ENCODE measurements at regions of chr12 and their contacts with region 1.

Region 1: GRCh38 chr12:26832822-26833742 is at the start of gene ITPR2:
- H3K4me3 Mint-ChIP-seq: peak within 1 kb of the TSS; percentile 94
- H3K27ac Mint-ChIP-seq: peak within 1 kb of the TSS; percentile 100
- H3K4me1 Mint-ChIP-seq: peaks cover 61% of the 10 kb centered on the region
- H3K27me3 Mint-ChIP-seq: no peaks in the 10 kb centered on the region

Region 2: GRCh38 chr12:26791301-26791791 is 41.7 kb before region 1 on chr12:
- intact Hi-C with region 1: loop called (anchors 1 kb)
- H3K4me3 Mint-ChIP-seq: no peak overlapping the region
- H3K27ac Mint-ChIP-seq: peak overlapping the region; percentile 60
- H3K4me1 Mint-ChIP-seq: peaks cover 44% of the 10 kb centered on the region
- H3K27me3 Mint-ChIP-seq: no peaks in the 10 kb centered on the region

Region 3: DNA sequence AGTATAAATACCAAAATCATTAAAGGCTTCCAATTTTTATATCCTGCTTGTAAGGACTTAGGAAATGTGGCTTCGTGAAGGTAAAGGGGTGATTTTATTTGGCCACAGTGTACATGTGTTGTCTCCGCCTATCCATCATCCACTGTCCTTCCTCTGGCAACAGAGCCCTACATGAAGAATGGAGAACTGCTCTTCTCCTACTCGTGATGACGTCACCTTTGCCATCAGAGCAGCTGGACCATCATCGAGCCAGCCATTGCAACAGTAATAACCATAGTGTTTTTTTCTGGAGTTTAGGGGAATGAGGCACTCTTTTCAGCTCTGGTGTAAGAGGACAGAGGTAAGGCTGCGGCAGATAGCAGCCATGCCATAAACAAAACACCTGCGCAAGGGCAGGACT is 19.3 kb before region 1 on chr12:
- intact Hi-C with region 1: loop called (anchors 2 kb)
- H3K4me3 Mint-ChIP-seq: no peak overlapping the region
- H3K27ac Mint-ChIP-seq: no peak overlapping the region
- H3K4me1 Mint-ChIP-seq: peaks cover 31% of the 10 kb centered on the region
- H3K27me3 Mint-ChIP-seq: no peaks in the 10 kb centered on the region

Measured in dendritic cell treated with granulocyte-macrophage colony-stimulating factor and Interleukin-4, amounts not matched to agents 40 ng/mL and 50 ng/mL, for 4 days (primary cell).